Activated B cell treated with CpG ODN at 0.5 μM for 24 hours (primary cell): ENCODE measurements at regions of chr6 and their contacts with region 1.

Region 1: DNA sequence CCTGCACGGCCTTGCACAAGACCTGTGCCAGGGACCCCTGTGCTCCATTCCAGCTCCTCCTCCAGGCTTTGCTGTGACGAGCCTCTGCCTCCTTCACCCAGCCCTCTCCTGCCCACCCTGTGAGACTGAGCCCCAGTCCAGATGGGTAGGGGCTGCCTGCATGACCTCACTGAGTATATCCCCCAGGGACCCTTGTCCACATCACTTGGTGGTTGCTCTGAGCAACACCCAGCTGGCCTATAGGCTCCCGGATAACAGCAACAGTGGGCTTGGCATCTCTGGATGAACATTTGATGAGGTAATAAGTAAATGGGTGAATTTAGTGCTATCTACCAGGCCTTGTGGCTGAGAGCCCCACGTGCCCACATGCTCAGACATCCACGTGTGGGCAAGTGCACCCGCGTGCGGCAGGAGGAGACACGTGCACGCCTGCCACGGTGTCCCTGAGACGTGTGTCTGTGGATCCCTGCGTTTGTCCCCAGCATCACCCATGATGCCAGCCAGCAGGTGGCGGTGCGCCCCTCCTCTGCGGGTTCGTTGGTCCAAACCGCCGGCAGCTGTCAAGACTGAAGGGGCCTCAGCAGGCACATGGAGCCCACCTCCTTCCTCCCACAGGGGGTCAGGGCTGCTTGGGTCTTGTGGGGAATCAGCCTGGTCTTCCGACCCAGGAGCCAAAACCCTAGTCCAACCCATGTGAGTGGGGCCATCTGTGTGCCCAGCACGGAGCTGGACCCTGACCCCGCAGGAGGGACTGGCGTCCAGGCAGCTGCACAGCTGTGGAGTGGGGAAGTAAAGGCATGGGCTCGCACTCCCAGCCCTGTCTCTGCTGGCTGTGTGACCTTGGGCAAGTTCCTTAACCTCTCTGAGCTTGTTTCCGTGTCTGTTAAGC is 45.9 kb downstream of the FGD2 start:
- DNase-seq: peak; percentile 89
- ATAC-seq: peak; percentile 44
- H3K4me3 Mint-ChIP-seq: peak overlapping the region; percentile 64
- H3K27ac Mint-ChIP-seq: peak overlapping the region; percentile 98
- H3K4me1 Mint-ChIP-seq: peaks cover 58% of the 10 kb centered on the region
- H3K27me3 Mint-ChIP-seq: peaks cover 1% of the 10 kb centered on the region
- CTCF ChIP-seq: no peak

Region 2: DNA sequence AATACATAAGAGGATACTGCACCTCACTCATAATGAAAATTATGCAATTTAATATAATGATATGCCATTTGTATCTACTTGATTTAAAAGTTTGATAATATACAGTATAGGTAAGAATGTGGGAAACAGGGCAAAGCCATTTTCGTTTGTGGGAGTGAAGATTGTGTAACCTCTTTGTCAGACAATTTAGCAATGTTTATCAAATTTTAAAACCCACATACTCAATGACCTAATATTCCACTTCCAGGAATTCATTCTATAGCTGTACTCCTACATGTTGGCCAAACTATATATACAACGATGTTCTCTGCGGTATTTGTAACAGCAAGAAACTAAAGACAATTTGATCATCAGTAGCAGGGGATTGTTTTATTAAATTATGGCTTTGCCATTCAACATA is 1344.9 kb before region 1 on chr6:
- CTCF ChIA-PET with region 1: no interaction called
- POLR2A ChIA-PET with region 1: no interaction called
- intact Hi-C with region 1: no loop called
- DNase-seq: no peak
- ATAC-seq: no peak
- H3K4me3 Mint-ChIP-seq: no peak overlapping the region
- H3K27ac Mint-ChIP-seq: no peak overlapping the region
- H3K4me1 Mint-ChIP-seq: no peaks in the 10 kb centered on the region
- H3K27me3 Mint-ChIP-seq: no peaks in the 10 kb centered on the region
- CTCF ChIP-seq: no peak

Region 3: DNA sequence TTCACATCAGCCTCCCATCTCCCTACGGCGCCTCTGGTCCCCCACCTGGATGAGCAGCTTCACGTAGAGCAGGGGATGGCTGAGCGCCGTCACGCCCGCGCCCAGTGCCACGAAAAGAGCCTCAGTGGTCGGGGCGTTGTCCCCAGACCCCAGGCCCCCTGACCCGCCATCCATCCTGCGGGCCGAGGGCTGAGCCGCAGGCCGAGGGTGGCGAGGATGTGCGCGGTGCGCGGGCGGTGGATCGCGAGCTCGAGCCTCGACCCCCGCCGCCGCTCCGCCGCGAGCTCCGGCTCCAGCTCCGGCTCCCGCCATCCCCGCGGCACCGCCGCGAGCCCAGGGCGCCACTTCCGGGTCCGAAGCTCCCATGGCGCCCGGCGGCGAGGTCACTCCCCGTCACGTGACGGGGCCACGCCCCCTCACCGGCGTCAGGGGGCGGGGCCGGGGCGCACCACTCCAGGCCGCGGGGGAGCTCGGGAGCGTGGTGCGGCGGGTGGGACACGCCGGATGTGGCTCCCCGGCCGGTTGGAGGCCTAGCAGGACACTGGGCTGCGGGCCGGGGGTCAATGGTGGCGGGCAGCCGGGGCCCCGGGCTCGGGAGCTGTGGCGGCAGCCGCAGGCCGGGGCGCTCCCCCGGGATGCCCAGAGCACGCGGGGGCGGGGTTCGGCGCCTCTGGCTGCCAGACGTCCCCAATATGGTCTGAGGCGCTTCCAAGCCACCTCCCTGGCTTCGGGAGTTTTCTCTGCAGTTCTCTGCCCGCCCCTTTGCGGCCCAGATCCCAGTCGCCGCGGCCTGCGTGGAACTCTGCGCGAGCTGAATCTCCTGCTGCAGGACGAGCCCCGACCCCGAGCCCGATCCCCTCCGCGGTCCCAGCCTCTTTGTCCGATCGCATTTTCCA is 65.3 kb before region 1 on chr6 and contains the start of gene MTCH1:
- CTCF ChIA-PET with region 1: no interaction called
- POLR2A ChIA-PET with region 1: interaction called, 10 read pairs
- intact Hi-C with region 1: no loop called
- DNase-seq: peak; percentile 96
- ATAC-seq: peak; percentile 87
- H3K4me3 Mint-ChIP-seq: peak within 1 kb of the TSS; percentile 96
- H3K27ac Mint-ChIP-seq: peak within 1 kb of the TSS; percentile 91
- H3K4me1 Mint-ChIP-seq: peaks cover 20% of the 10 kb centered on the region
- H3K27me3 Mint-ChIP-seq: no peaks in the 10 kb centered on the region
- CTCF ChIP-seq: no peak
- total RNA-seq, gene MTCH1: 128 and 133 TPM in 2 replicates

Region 4: DNA sequence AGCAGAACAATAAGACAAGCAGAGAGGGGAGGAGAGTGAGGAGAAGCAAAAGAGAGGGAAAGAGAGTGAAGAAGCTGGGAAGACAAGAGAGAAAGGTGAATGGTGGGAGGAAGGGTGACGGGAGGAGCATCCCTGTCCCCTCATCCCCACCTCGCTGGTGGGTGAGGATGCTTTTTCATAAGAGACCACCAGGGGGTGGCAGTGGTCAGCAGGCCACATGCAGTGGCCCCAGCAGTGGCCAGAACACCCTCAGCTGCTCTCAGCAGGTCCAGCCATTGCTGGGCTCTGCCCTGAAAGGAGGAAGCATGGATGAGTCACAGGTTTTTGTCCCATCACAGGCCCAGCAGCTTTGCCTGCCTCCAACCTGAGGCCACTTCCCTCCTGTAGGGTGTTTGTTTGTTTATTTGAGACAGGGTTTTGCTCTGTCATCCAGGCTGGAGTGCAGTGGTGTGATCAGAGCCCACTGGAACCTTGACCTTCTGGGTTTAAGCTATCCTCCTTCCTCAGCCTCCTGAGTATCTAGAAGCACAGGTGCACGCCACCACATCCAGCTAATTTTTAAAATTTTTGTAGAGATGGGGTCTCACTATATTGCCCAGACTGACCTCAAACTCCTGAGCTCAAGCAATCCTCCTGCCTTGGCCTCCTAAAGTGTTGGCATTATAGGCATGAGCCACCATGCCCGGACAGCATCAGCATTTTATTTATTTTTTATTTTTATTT is 22.0 kb before region 1 on chr6:
- CTCF ChIA-PET with region 1: interaction called, 89 read pairs
- POLR2A ChIA-PET with region 1: interaction called, 519 read pairs
- intact Hi-C with region 1: loop called (anchors 1 kb)
- DNase-seq: no peak
- ATAC-seq: peak; percentile 63
- H3K4me3 Mint-ChIP-seq: no peak overlapping the region
- H3K27ac Mint-ChIP-seq: peak overlapping the region; percentile 68
- H3K4me1 Mint-ChIP-seq: peaks cover 50% of the 10 kb centered on the region
- H3K27me3 Mint-ChIP-seq: no peaks in the 10 kb centered on the region
- CTCF ChIP-seq: no peak

Region 5: DNA sequence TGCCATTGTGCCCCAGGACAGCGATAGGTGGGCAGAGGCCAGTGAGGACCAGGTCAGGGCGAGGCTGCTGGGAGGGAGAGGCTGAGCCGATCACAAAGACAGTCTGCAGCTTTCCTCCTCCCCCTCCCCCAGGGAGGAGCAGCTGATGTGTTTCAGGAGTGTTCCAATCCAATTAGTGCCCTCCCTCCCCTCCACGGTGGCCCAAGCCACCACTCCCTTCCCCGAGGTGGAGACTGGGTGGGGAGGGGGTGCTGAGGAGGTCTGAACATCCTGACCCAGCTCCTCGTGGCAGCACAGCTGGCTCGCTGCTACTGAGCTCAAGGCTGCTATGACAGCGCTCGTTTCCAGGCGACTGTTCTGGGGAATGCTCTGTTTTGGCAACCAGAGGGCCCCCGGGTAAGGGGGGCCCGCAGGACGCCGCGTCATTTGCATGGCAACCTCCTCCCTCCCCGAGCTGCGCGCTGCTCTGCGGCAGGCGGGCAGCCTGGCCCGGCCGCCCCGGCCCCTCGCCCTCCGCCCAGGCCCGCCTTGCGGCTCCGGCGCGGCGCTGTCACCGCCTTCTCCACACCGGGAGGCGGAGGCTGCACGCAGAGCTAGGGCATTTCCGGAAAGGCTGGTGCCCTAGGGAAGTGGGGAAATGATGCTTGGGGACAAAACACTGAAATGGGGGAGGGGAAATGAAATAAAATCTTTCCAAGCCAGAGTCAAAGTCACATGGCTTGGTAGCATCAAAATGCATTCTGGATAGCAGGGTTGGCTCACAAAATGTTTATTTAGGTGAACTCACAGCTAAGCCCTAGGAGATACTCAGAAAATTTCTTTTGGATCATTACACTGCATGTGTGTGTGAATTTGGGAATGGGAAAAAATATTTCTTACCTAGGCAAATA is 51.1 kb after region 1 on chr6:
- CTCF ChIA-PET with region 1: interaction called, 12 read pairs
- POLR2A ChIA-PET with region 1: interaction called, 28 read pairs
- intact Hi-C with region 1: loop called (anchors 1 kb)
- DNase-seq: peak; percentile 70
- ATAC-seq: peak; percentile 80
- H3K4me3 Mint-ChIP-seq: peak overlapping the region; percentile 78
- H3K27ac Mint-ChIP-seq: peak overlapping the region; percentile 82
- H3K4me1 Mint-ChIP-seq: peaks cover 38% of the 10 kb centered on the region
- H3K27me3 Mint-ChIP-seq: no peaks in the 10 kb centered on the region
- CTCF ChIP-seq: no peak

Region 6: GRCh38 chr6:37149745-37150144 is 98.4 kb after region 1 on chr6:
- CTCF ChIA-PET with region 1: interaction called, 5 read pairs
- POLR2A ChIA-PET with region 1: interaction called, 118 read pairs
- intact Hi-C with region 1: no loop called
- DNase-seq: no peak
- ATAC-seq: peak; percentile 63
- H3K4me3 Mint-ChIP-seq: peak overlapping the region; percentile 77
- H3K27ac Mint-ChIP-seq: peak overlapping the region; percentile 88
- H3K4me1 Mint-ChIP-seq: peaks cover 57% of the 10 kb centered on the region
- H3K27me3 Mint-ChIP-seq: no peaks in the 10 kb centered on the region
- CTCF ChIP-seq: no peak

Region 7: DNA sequence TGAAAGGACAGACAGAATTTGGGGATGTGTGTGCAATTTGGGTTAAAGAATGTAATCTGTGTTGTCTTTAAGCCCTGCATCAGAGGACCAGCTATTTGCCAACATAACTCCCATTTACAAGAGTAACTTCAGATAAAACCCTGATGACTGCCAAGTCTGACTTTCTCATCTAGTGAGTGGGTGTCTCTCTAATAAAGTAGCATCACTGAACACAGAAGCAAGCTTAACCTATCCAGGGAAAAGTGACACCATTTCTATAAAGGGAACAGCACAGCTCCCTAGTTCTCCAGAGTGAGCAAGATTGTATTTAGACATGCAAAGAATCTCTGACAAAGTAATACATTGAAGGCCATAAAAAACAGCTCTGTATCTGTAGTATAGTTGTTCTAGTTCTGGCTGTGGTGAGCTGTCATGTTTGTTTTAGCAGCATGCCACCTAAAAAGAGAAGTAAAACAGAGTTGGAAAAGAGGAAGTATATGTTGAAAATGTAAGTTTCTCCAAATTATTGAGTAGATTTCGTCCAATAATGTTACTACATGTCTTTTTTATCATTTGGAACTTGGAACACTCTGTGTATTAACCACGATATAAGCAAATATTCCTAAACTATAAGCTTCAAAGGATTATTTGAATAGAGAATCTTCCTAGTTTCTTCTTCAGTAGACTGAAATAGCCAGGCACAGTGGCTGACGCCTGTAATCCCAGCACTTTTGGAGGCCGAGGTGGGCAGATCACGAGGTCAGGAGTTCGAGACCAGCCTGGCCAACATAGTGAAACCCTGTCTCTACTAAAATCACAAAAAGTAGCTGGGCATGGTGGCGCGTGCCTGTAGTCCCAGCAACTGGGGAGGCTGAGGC is 109.8 kb after region 1 on chr6:
- CTCF ChIA-PET with region 1: interaction called, 9 read pairs
- POLR2A ChIA-PET with region 1: interaction called, 118 read pairs
- intact Hi-C with region 1: no loop called
- DNase-seq: no peak
- ATAC-seq: peak; percentile 83
- H3K4me3 Mint-ChIP-seq: peak overlapping the region; percentile 50
- H3K27ac Mint-ChIP-seq: peak overlapping the region; percentile 90
- H3K4me1 Mint-ChIP-seq: peaks cover 40% of the 10 kb centered on the region
- H3K27me3 Mint-ChIP-seq: no peaks in the 10 kb centered on the region
- CTCF ChIP-seq: no peak

Region 8: DNA sequence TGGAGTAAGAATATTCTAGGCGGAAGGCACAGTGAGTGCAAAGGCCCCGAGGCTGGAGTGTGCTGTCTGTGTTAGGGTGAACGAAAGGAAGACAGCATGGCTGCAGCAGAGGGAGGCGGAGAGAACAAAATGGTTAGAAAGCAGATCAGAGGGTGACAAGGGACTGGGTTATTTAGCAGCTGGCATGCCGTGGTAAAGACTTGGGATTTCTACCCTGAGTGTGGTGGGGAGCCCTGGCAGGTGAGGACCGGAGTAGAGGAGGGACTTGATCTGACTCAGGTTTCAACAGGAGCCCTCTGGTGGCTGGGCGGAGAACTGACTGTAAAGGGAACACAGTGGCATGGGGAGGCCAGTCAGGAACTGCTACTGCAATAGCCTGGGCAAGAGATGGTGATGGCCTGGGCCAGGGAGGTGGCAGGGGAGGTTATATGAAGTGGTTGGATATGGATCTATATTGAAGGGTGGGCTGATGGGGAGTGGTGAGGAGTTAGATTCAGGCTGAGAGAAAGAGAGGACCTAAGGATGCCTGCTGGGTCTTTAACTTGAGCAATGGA is 156.6 kb after region 1 on chr6:
- CTCF ChIA-PET with region 1: interaction called, 149 read pairs
- POLR2A ChIA-PET with region 1: interaction called, 49 read pairs
- intact Hi-C with region 1: loop called (anchors 1 kb)
- DNase-seq: peak; percentile 79
- ATAC-seq: peak; percentile 97
- H3K4me3 Mint-ChIP-seq: no peak overlapping the region
- H3K27ac Mint-ChIP-seq: peak overlapping the region; percentile 5
- H3K4me1 Mint-ChIP-seq: peaks cover 20% of the 10 kb centered on the region
- H3K27me3 Mint-ChIP-seq: no peaks in the 10 kb centered on the region
- CTCF ChIP-seq: no peak